ENCODE measurements at regions of chr3 and their contacts with region 1.

Region 1: DNA sequence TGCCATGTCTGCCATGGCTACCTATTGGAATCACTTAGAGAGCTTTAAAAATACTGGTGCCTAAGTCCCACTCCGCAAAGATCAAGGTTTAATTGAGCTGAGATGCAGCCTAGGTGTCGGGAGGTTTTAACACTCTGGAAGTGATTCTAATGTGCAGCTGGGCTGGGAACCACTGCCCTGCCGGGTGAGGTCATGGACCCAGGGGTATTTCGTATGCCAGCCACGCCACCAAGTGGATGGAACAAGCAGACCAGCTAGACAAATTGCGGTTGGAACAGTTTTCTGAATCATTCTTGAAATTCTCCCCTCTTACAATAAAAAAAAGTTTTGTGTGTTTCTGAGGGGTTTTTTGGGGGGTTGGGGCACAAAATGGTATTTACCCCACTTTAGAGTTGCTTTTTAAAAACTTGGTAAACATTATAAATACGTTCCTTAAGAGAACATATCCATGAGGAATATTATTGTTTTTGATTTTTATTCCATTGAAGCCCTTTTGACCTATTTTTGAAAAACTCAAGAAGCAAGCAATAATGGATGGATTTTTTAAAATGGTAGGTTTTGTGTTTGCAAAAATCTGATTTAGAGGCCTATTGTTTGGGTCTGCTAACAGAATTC is 66.2 kb upstream of the CSTA start:
- DNase-seq: peak; percentile 83
- ATAC-seq: peak; percentile 86
- H3K4me3 ChIP-seq: no peak overlapping the region
- H3K27ac ChIP-seq: peak overlapping the region; percentile 5; the same call in 1 of the 2 replicates
- H3K4me1 ChIP-seq: peaks cover 5% of the 10 kb centered on the region; the same call in 1 of the 2 replicates
- H3K27me3 ChIP-seq: no peaks in the 10 kb centered on the region
- CTCF ChIP-seq: peak; percentile 75 to 91 (median 88)
- EP300 ChIP-seq: peak; percentile 19 to 58; a peak in 1 of 4 replicates
- POLR2A ChIP-seq: no peak
- RAD21 ChIP-seq: peak; percentile 97

Region 2: GRCh38 chr3:121834696-121835464 is 424.0 kb before region 1 on chr3 and contains the starts of genes EAF2 and IQCB1:
- CTCF ChIA-PET with region 1: no interaction called
- POLR2A ChIA-PET with region 1: no interaction called
- RAD21 ChIA-PET with region 1: interaction called, 3 read pairs
- SMC1A ChIA-PET with region 1: no interaction called
- in situ Hi-C with region 1: no loop called
- intact Hi-C with region 1: loop called (anchors 10 kb)
- DNase-seq: peak; percentile 93
- ATAC-seq: peak; percentile 95
- H3K4me3 ChIP-seq: peak within 1 kb of the TSS; percentile 95
- H3K27ac ChIP-seq: peak within 1 kb of the TSS; percentile 98
- H3K4me1 ChIP-seq: peaks cover 7% of the 10 kb centered on the region; the same call in 1 of the 2 replicates
- H3K27me3 ChIP-seq: no peaks in the 10 kb centered on the region
- CTCF ChIP-seq: 0 out of 6 replicates have a peak, but pooled peaks of 2 of the 3 experiments have one; percentile 2 to 5
- EP300 ChIP-seq: no peak
- POLR2A ChIP-seq: peak; percentile 97
- RAD21 ChIP-seq: no peak
- polyA plus RNA-seq, gene EAF2: 172 to 193 TPM
- polyA plus RNA-seq, gene IQCB1: 36.0 to 45.1 TPM

Region 3: DNA sequence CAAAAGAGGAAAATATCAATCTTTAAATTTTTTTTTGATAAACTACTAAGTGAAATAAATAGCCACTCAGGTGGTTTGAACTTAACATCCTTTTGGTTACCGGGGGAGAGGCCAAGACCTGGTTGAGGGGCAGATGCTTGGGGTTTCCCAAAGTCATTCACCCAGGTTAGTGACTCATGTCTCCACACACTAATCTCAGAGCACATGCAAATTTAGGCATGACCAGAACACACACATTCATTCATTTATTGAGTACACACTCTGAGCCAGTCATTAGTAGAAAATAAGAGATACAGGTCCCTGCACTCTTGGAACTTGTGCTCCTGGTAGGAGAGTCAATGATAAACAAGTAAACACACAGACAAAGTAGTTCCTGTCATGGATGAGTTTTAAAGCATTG is 244.1 kb before region 1 on chr3:
- CTCF ChIA-PET with region 1: interaction called, 3 read pairs
- POLR2A ChIA-PET with region 1: interaction called, 4 read pairs
- RAD21 ChIA-PET with region 1: interaction called, 11 read pairs
- SMC1A ChIA-PET with region 1: interaction called, 16 read pairs
- in situ Hi-C with region 1: no loop called
- intact Hi-C with region 1: loop called (anchors 5 kb)
- DNase-seq: peak; percentile 91
- ATAC-seq: peak; percentile 80
- H3K4me3 ChIP-seq: peak overlapping the region; percentile 18; the same call in 1 of the 2 replicates
- H3K27ac ChIP-seq: peak overlapping the region; percentile 60
- H3K4me1 ChIP-seq: peaks cover 72% of the 10 kb centered on the region
- H3K27me3 ChIP-seq: no peaks in the 10 kb centered on the region
- CTCF ChIP-seq: no peak
- EP300 ChIP-seq: peak; percentile 81 to 86; a peak in 3 of 4 replicates
- POLR2A ChIP-seq: no peak
- RAD21 ChIP-seq: no peak

Region 4: DNA sequence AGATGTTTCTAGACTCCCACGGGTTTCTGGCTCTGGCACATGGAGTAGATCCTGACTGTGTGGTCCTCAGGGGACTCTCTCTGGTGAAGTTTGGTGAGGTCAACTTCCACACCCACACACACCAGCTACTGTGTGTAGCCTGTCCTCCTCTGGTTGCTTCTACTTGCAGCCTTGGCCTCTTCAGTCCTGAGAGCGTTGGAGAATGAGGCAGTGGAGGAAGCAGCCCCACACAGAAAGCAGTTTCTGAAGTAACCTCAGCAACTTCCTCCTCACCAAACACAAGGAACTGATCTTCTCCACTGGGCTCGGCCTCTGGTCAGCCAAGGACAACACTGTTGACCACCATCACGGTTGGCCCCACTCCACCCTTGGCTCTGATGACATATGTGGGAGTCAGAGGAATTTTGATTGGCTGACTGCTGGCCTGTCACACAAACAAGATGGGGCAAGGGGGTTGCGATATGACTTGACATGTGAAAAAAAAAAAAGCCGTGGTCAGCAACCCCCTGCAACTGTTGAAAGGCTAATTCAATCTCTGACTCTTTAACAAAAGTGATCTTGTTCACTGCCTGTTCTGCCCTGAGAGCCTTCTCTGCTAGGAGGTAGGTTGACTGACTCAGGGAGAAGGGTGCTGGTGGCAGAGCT is 184.1 kb before region 1 on chr3:
- CTCF ChIA-PET with region 1: interaction called, 6 read pairs
- POLR2A ChIA-PET with region 1: interaction called, 3 read pairs
- RAD21 ChIA-PET with region 1: interaction called, 13 read pairs
- SMC1A ChIA-PET with region 1: interaction called, 9 read pairs
- in situ Hi-C with region 1: no loop called
- intact Hi-C with region 1: no loop called
- DNase-seq: peak; percentile 92
- ATAC-seq: peak; percentile 70
- H3K4me3 ChIP-seq: peak overlapping the region; percentile 72
- H3K27ac ChIP-seq: peak overlapping the region; percentile 97
- H3K4me1 ChIP-seq: peaks cover 45% of the 10 kb centered on the region
- H3K27me3 ChIP-seq: no peaks in the 10 kb centered on the region
- CTCF ChIP-seq: no peak
- EP300 ChIP-seq: peak; percentile 65 to 76
- POLR2A ChIP-seq: peak; percentile 73
- RAD21 ChIP-seq: no peak

Region 5: GRCh38 chr3:122112754-122113153 is 146.1 kb before region 1 on chr3:
- CTCF ChIA-PET with region 1: interaction called, 6 read pairs
- POLR2A ChIA-PET with region 1: interaction called, 178 read pairs
- RAD21 ChIA-PET with region 1: interaction called, 441 read pairs
- SMC1A ChIA-PET with region 1: interaction called, 590 read pairs
- in situ Hi-C with region 1: no loop called
- intact Hi-C with region 1: no loop called
- DNase-seq: no peak
- ATAC-seq: peak; percentile 71; the same call in 2 of the 3 replicates
- H3K4me3 ChIP-seq: no peak overlapping the region
- H3K27ac ChIP-seq: no peak overlapping the region
- H3K4me1 ChIP-seq: peaks cover 8% of the 10 kb centered on the region; the same call in 1 of the 2 replicates
- H3K27me3 ChIP-seq: no peaks in the 10 kb centered on the region
- CTCF ChIP-seq: no peak
- EP300 ChIP-seq: no peak
- POLR2A ChIP-seq: no peak
- RAD21 ChIP-seq: no peak

Region 6: GRCh38 chr3:122233101-122233952 is 25.5 kb before region 1 on chr3:
- CTCF ChIA-PET with region 1: interaction called, 37 read pairs
- POLR2A ChIA-PET with region 1: interaction called, 6 read pairs
- RAD21 ChIA-PET with region 1: interaction called, 48 read pairs
- SMC1A ChIA-PET with region 1: interaction called, 262 read pairs
- in situ Hi-C with region 1: no loop called
- intact Hi-C with region 1: loop called (anchors 2 kb)
- DNase-seq: peak; percentile 86
- ATAC-seq: peak; percentile 83
- H3K4me3 ChIP-seq: 0 out of 2 replicates have a peak overlapping the region, but pooled peaks have one; percentile 13
- H3K27ac ChIP-seq: peak overlapping the region; percentile 86
- H3K4me1 ChIP-seq: peaks cover 38% of the 10 kb centered on the region
- H3K27me3 ChIP-seq: no peaks in the 10 kb centered on the region
- CTCF ChIP-seq: 0 out of 6 replicates have a peak, but pooled peaks of 1 of the 3 experiments have one; percentile 1
- EP300 ChIP-seq: peak; percentile 57 to 68; a peak in 3 of 4 replicates
- POLR2A ChIP-seq: no peak
- RAD21 ChIP-seq: no peak

Region 7: GRCh38 chr3:122271246-122271898 is 12.5 kb after region 1 on chr3:
- CTCF ChIA-PET with region 1: interaction called, 13 read pairs
- POLR2A ChIA-PET with region 1: no interaction called
- RAD21 ChIA-PET with region 1: interaction called, 8 read pairs
- SMC1A ChIA-PET with region 1: interaction called, 28 read pairs
- in situ Hi-C with region 1: no loop called
- intact Hi-C with region 1: no loop called
- DNase-seq: no peak
- ATAC-seq: peak; percentile 58
- H3K4me3 ChIP-seq: peak overlapping the region; percentile 17; the same call in 1 of the 2 replicates
- H3K27ac ChIP-seq: peak overlapping the region; percentile 43
- H3K4me1 ChIP-seq: peaks cover 38% of the 10 kb centered on the region
- H3K27me3 ChIP-seq: no peaks in the 10 kb centered on the region
- CTCF ChIP-seq: no peak
- EP300 ChIP-seq: peak in 1 of 2 experiments; percentile 85; a peak in 3 of 4 replicates
- POLR2A ChIP-seq: no peak
- RAD21 ChIP-seq: no peak